Ovary (tissue), 10 donors: ENCODE measurements at regions of chr1 and their contacts with region 1.

Region 1: DNA sequence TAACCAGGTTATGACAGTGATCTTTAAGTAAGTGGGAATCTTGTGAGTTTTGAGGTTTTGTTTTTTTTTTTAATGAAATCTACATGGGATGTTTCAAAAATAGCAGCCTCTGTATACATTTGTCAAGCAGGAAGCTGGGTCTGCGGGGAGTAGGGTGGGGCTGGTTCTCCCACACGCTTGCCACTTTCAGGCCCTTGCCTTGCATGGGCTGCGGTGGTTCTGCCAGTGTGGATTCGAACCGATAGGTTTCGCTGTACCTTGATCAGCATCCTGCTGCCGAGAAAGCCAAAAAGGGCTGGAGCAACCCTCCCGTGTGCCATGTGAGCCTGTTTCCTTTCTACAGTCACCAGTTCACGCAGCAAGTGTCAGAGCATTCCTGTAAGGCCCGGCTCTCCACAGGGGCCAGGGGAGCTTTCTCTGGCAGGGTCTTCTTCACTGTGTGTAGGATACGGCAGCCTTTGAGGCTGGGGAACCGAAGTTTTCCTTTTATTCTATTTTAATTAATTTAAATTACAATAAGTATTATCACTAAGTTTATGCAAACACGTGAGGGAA is 79.2 kb upstream of the SAMD11 start:
- DNase-seq: no peak
- H3K4me3 ChIP-seq: no peak overlapping the region
- H3K27ac ChIP-seq: no peak overlapping the region
- H3K4me1 ChIP-seq: no peaks in the 10 kb centered on the region
- H3K27me3 ChIP-seq: no peaks in the 10 kb centered on the region
- CTCF ChIP-seq: no peak
- EP300 ChIP-seq: no peak
- POLR2A ChIP-seq: no peak

Region 2: GRCh38 chr1:1050577-1051052 is 206.1 kb after region 1 on chr1:
- intact Hi-C with region 1: no loop called
- DNase-seq: no peak
- H3K4me3 ChIP-seq: no peak overlapping the region
- H3K27ac ChIP-seq: no peak overlapping the region
- H3K4me1 ChIP-seq: no peaks in the 10 kb centered on the region
- H3K27me3 ChIP-seq: no peaks in the 10 kb centered on the region
- CTCF ChIP-seq: no peak
- EP300 ChIP-seq: no peak
- POLR2A ChIP-seq: no peak

Region 3: GRCh38 chr1:1200851-1201810 is 356.6 kb after region 1 on chr1:
- intact Hi-C with region 1: no loop called
- DNase-seq: peak; percentile 39 to 78 (median 63)
- H3K4me3 ChIP-seq: peak overlapping the region; percentile 40
- H3K27ac ChIP-seq: no peak overlapping the region
- H3K4me1 ChIP-seq: no peaks in the 10 kb centered on the region
- H3K27me3 ChIP-seq: no peaks in the 10 kb centered on the region
- CTCF ChIP-seq: no peak
- EP300 ChIP-seq: no peak
- POLR2A ChIP-seq: no peak

Region 4: DNA sequence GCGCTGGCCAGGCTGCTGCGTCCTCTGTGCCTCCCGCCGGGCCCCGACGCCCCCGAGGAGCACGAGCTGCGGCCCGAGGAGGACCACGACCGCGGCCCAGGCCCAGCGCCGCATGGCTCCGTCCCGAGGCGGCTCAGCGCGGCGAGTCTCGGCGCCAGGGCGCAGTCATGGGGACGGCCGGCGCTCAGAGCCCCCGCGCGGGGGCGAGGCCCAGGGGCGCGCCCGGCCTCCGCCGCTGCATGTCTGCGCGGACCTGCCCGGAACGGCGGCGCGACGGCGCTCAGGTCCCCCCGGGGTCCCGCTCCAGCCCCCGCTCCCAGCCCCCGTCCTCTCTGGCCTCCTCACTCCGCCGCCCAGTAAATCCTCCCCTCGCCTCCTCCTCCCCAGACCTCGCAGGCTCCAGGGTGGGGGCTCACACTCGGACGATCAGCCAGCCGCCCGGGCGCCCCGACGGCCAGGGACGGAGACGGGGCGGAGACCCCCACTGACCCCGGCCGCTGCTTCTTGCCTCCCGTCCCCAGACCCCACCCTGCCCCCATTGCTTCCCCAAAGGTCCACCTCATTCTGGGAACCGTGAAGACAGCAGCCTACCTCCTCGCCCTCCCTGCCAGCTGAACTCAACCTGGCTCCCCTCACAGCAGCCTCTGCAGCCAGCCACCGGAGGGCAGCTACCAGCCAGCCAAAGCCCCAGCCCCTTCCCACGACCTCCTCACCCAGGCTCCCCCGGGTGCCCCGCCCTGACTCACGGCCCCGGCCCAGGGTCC is 402.2 kb after region 1 on chr1 and contains the start of gene C1QTNF12:
- intact Hi-C with region 1: loop called in 1 of 4 experiments (anchors 5 kb)
- DNase-seq: no peak
- H3K4me3 ChIP-seq: no peak within 1 kb of the TSS
- H3K27ac ChIP-seq: no peak within 1 kb of the TSS
- H3K4me1 ChIP-seq: no peaks in the 10 kb centered on the region
- H3K27me3 ChIP-seq: peaks cover under 1% of the 10 kb centered on the region
- CTCF ChIP-seq: no peak
- EP300 ChIP-seq: no peak
- POLR2A ChIP-seq: no peak
- total RNA-seq, gene C1QTNF12: 0.92 to 4.8 (median 1.5) TPM